ENCODE measurements at regions of chr2 and their contacts with region 1.

Region 1: DNA sequence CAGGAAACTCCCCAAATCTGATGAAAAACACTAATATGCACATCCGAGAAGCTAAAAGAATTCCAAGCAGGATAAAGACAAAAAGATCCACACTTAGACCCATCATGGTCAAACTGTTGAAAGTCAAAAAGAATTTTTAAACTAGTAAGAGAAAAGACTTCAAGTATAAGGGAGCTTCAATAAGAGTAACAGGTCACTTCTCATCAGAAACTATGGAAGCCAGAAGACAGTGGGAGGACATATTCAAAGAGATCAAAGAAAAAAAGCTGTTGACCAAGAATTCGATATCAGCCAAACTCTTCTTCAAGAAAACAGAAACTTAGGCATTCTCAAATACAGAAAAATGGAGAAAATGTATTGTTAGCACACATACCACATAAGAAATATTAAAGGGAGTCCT is 50.4 kb downstream of the ZC3H8 start:
- DNase-seq: peak in 1 of 9 donors; percentile 26
- ATAC-seq: no peak
- H3K4me3 ChIP-seq: no peak overlapping the region
- H3K4me3 Mint-ChIP-seq: no peak overlapping the region
- H3K27ac ChIP-seq: no peak overlapping the region
- H3K27ac Mint-ChIP-seq: peak overlapping the region in 2 of 9 donors; percentile 62 to 71
- H3K4me1 ChIP-seq: no peaks in the 10 kb centered on the region
- H3K4me1 Mint-ChIP-seq: peaks cover 2 to 21% (median 9%) of the 10 kb centered on the region in 7 donors
- H3K27me3 ChIP-seq: no peaks in the 10 kb centered on the region
- H3K27me3 Mint-ChIP-seq: no peaks in the 10 kb centered on the region

Region 2: DNA sequence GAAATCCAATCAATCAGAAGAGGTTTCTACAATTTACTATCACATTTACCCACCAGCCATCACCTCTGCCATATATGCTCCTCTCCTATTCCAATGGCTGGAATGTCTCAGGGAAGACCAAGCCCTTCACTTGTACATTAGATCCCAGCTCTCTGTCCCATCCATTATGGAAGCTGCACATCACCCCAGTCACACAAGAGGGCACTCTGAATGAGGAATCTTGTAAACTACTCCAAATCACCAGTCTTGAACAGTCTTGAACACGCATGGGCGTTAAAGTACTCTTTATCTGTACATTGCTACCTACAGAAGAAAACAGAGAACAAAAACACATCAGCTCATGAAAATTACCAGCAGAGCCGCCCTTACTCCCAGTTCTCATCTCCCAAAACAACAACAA is 11.8 kb after region 1 on chr2:
- CTCF ChIA-PET with region 1: interaction called, 4 read pairs
- POLR2A ChIA-PET with region 1: interaction called, 4 read pairs
- intact Hi-C with region 1: loop called in 1 of 2 experiments (anchors 1 kb)
- DNase-seq: no peak
- ATAC-seq: no peak
- H3K4me3 ChIP-seq: no peak overlapping the region
- H3K4me3 Mint-ChIP-seq: no peak overlapping the region
- H3K27ac ChIP-seq: no peak overlapping the region
- H3K27ac Mint-ChIP-seq: peak overlapping the region in 4 of 9 donors; percentile 10 to 41 (median 33)
- H3K4me1 ChIP-seq: no peaks in the 10 kb centered on the region
- H3K4me1 Mint-ChIP-seq: peaks cover 0 to 10% (median 5%) of the 10 kb centered on the region in 7 donors
- H3K27me3 ChIP-seq: no peaks in the 10 kb centered on the region
- H3K27me3 Mint-ChIP-seq: no peaks in the 10 kb centered on the region

Region 3: GRCh38 chr2:112242384-112242783 is 38.0 kb after region 1 on chr2:
- CTCF ChIA-PET with region 1: no interaction called
- POLR2A ChIA-PET with region 1: no interaction called
- intact Hi-C with region 1: loop called in 1 of 2 experiments (anchors 5 kb)
- DNase-seq: peak in 6 of 9 donors; percentile 14 to 39 (median 30)
- ATAC-seq: peak; percentile 53
- H3K4me3 ChIP-seq: no peak overlapping the region
- H3K4me3 Mint-ChIP-seq: peak overlapping the region in 8 of 10 donors; percentile 41 to 76 (median 60)
- H3K27ac ChIP-seq: peak overlapping the region; percentile 34
- H3K27ac Mint-ChIP-seq: peak overlapping the region in 8 of 9 donors; percentile 59 to 85 (median 76)
- H3K4me1 ChIP-seq: peaks cover 0 to 23% of the 10 kb centered on the region in 2 donors
- H3K4me1 Mint-ChIP-seq: peaks cover 13 to 59% (median 57%) of the 10 kb centered on the region in 7 donors
- H3K27me3 ChIP-seq: no peaks in the 10 kb centered on the region
- H3K27me3 Mint-ChIP-seq: no peaks in the 10 kb centered on the region